Psoas muscle (tissue), 8 donors: ENCODE measurements at regions of chr1 and their contacts with region 1.

Region 1: GRCh38 chr1:25476186-25477097 is 45.7 kb downstream of the MACO1 start:
- DNase-seq: no peak
- ATAC-seq: peak; percentile 74 to 88 (median 80)
- H3K4me3 ChIP-seq: peak overlapping the region; percentile 1
- H3K27ac ChIP-seq: peak overlapping the region; percentile 86
- H3K4me1 ChIP-seq: peaks cover 90% of the 10 kb centered on the region
- H3K27me3 ChIP-seq: no peaks in the 10 kb centered on the region
- CTCF ChIP-seq: no peak

Region 2: DNA sequence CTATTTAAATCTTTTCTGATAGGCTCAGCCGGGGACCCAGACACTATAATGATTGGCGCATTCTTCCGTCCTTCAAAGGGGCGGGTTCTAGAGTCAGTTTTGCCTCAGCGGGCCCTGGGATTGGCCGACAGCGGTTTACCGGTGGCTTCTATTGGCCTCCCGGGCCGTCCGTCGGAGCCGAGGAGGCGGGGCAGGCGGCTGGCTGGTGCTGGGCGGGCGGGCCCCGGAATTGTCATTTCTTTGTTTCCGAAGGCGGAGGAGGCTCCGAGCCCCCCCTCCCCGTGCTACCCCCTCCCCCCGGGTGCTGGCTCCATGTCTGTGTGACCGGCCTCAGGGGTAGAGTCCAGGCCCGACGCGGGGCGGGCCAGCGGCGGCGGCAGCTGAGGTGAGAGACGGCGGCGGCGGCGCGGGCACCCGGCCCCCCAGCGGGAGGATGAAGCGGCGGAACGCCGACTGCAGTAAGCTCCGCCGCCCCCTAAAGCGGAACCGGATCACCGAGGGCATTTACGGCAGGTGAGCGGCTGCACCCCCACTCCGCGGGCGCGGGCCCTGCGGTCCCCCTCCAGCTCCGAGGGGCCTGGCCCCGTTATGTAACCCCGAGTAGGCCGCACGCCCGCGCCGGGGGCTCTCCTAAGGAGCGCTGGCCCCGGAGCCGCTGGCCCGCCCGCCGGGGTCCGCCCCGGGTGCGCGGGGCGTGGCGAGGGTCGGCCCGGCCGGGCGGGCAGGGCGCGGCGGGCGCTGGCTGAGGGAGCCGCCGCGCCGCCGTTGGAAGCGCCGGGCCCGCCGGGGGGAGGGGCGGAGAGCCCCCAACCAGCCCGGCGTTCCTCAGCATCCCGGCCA is 45.6 kb before region 1 on chr1 and contains the start of gene MACO1:
- intact Hi-C with region 1: loop called (anchors 2 to 5 kb)
- DNase-seq: peak; percentile 97 to 98
- ATAC-seq: peak; percentile 93 to 94 (median 93)
- H3K4me3 ChIP-seq: peak within 1 kb of the TSS; percentile 94
- H3K27ac ChIP-seq: peak within 1 kb of the TSS; percentile 95
- H3K4me1 ChIP-seq: peaks cover 38% of the 10 kb centered on the region
- H3K27me3 ChIP-seq: no peaks in the 10 kb centered on the region
- CTCF ChIP-seq: no peak
- total RNA-seq, gene MACO1: 22.7 to 49.7 (median 30.8) TPM